GM12878 (cell line): ENCODE measurements at regions of chr4 and their contacts with region 1.

Region 1: DNA sequence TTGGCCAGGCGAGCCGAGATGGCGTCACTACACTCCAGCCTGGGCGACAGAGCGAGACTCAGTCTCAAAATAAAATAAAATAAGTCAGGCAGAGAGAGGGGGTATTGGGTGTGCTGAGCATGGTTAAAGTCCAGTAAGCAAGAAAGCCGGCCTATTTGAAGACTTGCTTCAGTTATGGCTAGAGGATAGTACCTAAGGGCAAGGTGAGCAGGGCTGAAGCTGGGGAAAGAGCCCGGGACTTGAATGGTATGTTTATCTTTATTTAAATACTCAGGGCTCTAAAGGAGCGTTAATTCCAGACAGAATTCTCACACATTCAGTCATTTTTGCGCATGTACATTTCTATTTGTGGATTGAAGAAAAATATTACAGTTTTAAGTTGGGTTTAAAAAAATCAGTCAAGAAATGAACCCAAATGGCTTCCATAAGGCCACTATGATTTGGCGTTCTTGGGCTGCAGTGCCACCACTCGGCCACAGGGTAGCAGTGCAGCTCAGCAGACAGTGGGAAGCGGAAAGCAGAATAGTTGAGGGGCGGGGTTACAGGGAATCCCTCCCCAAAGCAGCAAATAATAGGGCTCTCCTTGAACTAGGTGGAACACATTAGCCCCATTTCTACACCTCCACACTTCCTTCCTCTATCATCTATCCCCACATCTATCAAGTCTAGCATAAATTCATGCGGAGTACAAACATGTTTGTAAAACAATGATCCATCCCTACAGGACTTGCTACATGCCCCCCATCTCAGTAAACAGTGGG is 37.2 kb upstream of the SH3D19 start:
- DNase-seq: peak; percentile 27
- ATAC-seq: peak; percentile 100
- H3K4me3 ChIP-seq: no peak overlapping the region
- H3K27ac ChIP-seq: no peak overlapping the region
- H3K4me1 ChIP-seq: no peaks in the 10 kb centered on the region
- H3K27me3 ChIP-seq: no peaks in the 10 kb centered on the region
- CTCF ChIP-seq: peak; percentile 98; a peak in 5 of 6 replicates
- EP300 ChIP-seq: no peak
- POLR2A ChIP-seq: no peak
- RAD21 ChIP-seq: peak; percentile 97

Region 2: GRCh38 chr4:151408630-151409469 is 46.3 kb after region 1 on chr4 and contains the start of gene FHIP1A:
- CTCF ChIA-PET with region 1: interaction called, 3 read pairs
- POLR2A ChIA-PET with region 1: interaction called, 3 read pairs
- RAD21 ChIA-PET with region 1: no interaction called
- SMC1A ChIA-PET with region 1: interaction called, 3 read pairs
- in situ Hi-C with region 1: no loop called
- intact Hi-C with region 1: loop called (anchors 5 kb)
- DNase-seq: no peak
- ATAC-seq: peak; percentile 89
- H3K4me3 ChIP-seq: peak within 1 kb of the TSS; percentile 70
- H3K27ac ChIP-seq: no peak within 1 kb of the TSS
- H3K4me1 ChIP-seq: peaks cover 17% of the 10 kb centered on the region
- H3K27me3 ChIP-seq: peaks cover 0 to 6% of the 10 kb centered on the region in 2 experiments; a peak in 2 of 4 replicates
- CTCF ChIP-seq: no peak; a peak in 1 of 6 replicates
- EP300 ChIP-seq: no peak
- POLR2A ChIP-seq: no peak
- RAD21 ChIP-seq: no peak
- polyA plus RNA-seq, gene FHIP1A: 0.02 to 0.06 TPM

Region 3: GRCh38 chr4:151604238-151604637 is 241.7 kb after region 1 on chr4:
- CTCF ChIA-PET with region 1: interaction called, 28 read pairs
- POLR2A ChIA-PET with region 1: no interaction called
- RAD21 ChIA-PET with region 1: interaction called, 3 read pairs
- SMC1A ChIA-PET with region 1: interaction called, 3 read pairs
- in situ Hi-C with region 1: no loop called
- intact Hi-C with region 1: loop called (anchors 1 kb)
- DNase-seq: no peak
- ATAC-seq: peak; percentile 67
- H3K4me3 ChIP-seq: no peak overlapping the region
- H3K27ac ChIP-seq: no peak overlapping the region
- H3K4me1 ChIP-seq: no peaks in the 10 kb centered on the region
- H3K27me3 ChIP-seq: peaks cover 0 to 1% of the 10 kb centered on the region in 2 experiments; a peak in 3 of 4 replicates
- CTCF ChIP-seq: peak; percentile 26 to 42 (median 34); a peak in 4 of 6 replicates
- EP300 ChIP-seq: no peak
- POLR2A ChIP-seq: no peak
- RAD21 ChIP-seq: peak; percentile 45; the same call in 1 of the 2 replicates

Region 4: DNA sequence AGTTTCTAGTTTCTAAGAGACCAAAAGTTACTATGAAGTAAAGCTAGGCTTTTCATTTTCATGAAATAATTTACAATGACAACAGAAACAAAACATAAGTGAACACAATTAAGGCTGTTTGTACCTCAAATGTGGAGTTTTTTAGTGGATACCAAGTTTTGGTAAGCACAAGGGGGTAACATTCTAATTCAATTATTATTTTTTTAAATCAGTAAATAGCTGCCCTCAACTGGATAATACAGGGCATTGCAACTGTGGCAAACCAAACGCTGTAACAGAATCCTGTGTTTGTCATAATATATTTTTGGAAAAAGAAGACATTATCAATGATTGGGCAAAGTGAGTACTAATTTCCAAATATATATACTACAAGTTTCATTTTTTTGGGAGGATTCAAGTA is 1023.0 kb after region 1 on chr4:
- CTCF ChIA-PET with region 1: no interaction called
- POLR2A ChIA-PET with region 1: no interaction called
- RAD21 ChIA-PET with region 1: no interaction called
- SMC1A ChIA-PET with region 1: no interaction called
- in situ Hi-C with region 1: no loop called
- intact Hi-C with region 1: loop called (anchors 10 kb)
- DNase-seq: no peak
- ATAC-seq: peak; percentile 57
- H3K4me3 ChIP-seq: no peak overlapping the region
- H3K27ac ChIP-seq: no peak overlapping the region
- H3K4me1 ChIP-seq: no peaks in the 10 kb centered on the region
- H3K27me3 ChIP-seq: no peaks in the 10 kb centered on the region
- CTCF ChIP-seq: peak; percentile 39 to 48 (median 42)
- EP300 ChIP-seq: no peak
- POLR2A ChIP-seq: no peak
- RAD21 ChIP-seq: peak; percentile 57